Breast epithelium (tissue), 4 donors: ENCODE measurements at regions of chr3 and their contacts with region 1.

Region 1: DNA sequence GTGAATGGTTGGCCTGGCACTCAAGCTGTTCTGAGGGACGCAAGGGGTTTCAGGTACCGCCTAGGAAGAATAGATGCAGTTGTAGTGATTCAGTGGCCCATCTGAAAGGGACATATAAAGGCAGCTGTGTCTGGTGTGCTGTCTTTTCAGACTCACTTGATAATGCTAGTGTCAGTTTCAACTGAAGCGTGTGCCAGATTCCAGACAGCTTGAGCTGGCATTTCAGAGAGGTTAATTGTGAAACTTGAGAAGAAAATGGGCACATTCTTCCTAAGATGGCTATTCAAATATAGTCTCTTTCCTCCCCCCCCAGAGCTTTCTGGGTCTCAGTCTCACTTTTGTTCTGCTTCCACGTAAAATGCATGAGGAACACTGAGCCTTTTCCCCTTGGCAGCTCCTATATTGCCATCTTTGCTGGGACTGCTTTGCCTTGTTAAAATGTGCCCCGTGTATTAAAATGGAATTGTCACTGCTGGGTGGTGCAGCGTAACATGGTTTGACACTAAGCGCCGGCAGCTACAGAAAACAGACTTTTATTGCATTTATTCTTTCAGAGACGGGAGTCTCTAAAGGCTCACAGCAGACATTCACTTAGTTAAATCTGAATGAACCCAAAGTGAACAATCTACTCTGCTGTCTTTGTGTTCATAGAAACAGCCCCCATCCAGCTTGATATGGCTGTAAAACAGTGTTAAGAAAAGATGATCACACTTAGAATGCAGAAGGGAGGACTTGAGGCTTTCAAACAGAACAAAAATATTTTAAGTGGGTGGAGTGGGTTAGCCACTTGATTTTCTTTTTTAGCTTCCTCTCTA is 478.7 kb downstream of the RBMS3 start:
- DNase-seq: no peak
- H3K4me3 ChIP-seq: peak overlapping the region in 1 of 3 donors; percentile 12
- H3K27ac ChIP-seq: peak overlapping the region; percentile 79 to 91
- H3K4me1 ChIP-seq: peaks cover 7 to 17% of the 10 kb centered on the region in 2 donors
- H3K27me3 ChIP-seq: no peaks in the 10 kb centered on the region
- CTCF ChIP-seq: no peak
- POLR2A ChIP-seq: no peak

Region 2: GRCh38 chr3:29280404-29281093 is 479.1 kb before region 1 on chr3 and contains the start of gene RBMS3:
- intact Hi-C with region 1: loop called (anchors 5 kb)
- DNase-seq: peak; percentile 60 to 86
- H3K4me3 ChIP-seq: peak within 1 kb of the TSS; percentile 61 to 81 (median 65)
- H3K27ac ChIP-seq: peak within 1 kb of the TSS; percentile 88 to 94
- H3K4me1 ChIP-seq: no peaks in the 10 kb centered on the region
- H3K27me3 ChIP-seq: no peaks in the 10 kb centered on the region
- CTCF ChIP-seq: peak in 2 of 3 donors; percentile 40 to 43
- POLR2A ChIP-seq: no peak
- total RNA-seq, gene RBMS3: 48.4 to 117 (median 103) TPM